ENCODE measurements at regions of chr9 and their contacts with region 1.

Region 1: DNA sequence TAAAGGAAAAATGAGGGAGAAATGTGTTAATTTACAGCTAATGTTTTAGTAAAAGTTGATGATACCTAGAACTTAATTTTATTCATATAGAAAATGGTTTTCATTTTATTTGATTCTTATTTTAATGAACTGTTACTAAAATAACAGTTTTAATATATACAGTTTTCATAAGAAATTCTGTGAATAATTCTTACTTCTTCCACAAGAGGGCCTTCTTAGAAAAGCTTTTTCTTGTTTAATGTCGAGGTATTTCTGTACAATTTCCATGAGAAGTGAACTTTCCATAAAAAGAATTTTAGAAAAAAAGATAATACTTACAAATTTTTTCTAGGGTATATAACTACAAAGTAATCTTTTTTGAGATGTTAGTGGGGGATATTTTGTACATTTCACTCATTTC is 73.9 kb downstream of the KLF9 start:
- DNase-seq: peak; percentile 5
- H3K4me3 ChIP-seq: no peak overlapping the region
- H3K27ac ChIP-seq: peak overlapping the region in 1 of 2 experiments; percentile 40; a peak in 1 of 4 replicates
- H3K4me1 ChIP-seq: no peaks in the 10 kb centered on the region; a peak in 1 of 4 replicates
- H3K27me3 ChIP-seq: no peaks in the 10 kb centered on the region
- CTCF ChIP-seq: peak; percentile 71
- EP300 ChIP-seq: no peak
- RAD21 ChIP-seq: peak; percentile 67

Region 2: GRCh38 chr9:70285246-70285645 is 55.3 kb before region 1 on chr9:
- CTCF ChIA-PET with region 1: no interaction called
- POLR2A ChIA-PET with region 1: no interaction called
- DNase-seq: peak; percentile 22
- H3K4me3 ChIP-seq: no peak overlapping the region
- H3K27ac ChIP-seq: peak overlapping the region in 1 of 2 experiments; percentile 71; a peak in 2 of 4 replicates
- H3K4me1 ChIP-seq: peaks cover 0 to 7% of the 10 kb centered on the region in 2 experiments; a peak in 2 of 4 replicates
- H3K27me3 ChIP-seq: no peaks in the 10 kb centered on the region
- CTCF ChIP-seq: no peak
- EP300 ChIP-seq: no peak
- RAD21 ChIP-seq: no peak

Region 3: GRCh38 chr9:70324963-70325362 is 15.6 kb before region 1 on chr9:
- CTCF ChIA-PET with region 1: interaction called, 10 read pairs
- POLR2A ChIA-PET with region 1: no interaction called
- DNase-seq: no peak
- H3K4me3 ChIP-seq: no peak overlapping the region
- H3K27ac ChIP-seq: no peak overlapping the region
- H3K4me1 ChIP-seq: no peaks in the 10 kb centered on the region
- H3K27me3 ChIP-seq: no peaks in the 10 kb centered on the region
- CTCF ChIP-seq: no peak
- EP300 ChIP-seq: no peak
- RAD21 ChIP-seq: no peak

Region 4: DNA sequence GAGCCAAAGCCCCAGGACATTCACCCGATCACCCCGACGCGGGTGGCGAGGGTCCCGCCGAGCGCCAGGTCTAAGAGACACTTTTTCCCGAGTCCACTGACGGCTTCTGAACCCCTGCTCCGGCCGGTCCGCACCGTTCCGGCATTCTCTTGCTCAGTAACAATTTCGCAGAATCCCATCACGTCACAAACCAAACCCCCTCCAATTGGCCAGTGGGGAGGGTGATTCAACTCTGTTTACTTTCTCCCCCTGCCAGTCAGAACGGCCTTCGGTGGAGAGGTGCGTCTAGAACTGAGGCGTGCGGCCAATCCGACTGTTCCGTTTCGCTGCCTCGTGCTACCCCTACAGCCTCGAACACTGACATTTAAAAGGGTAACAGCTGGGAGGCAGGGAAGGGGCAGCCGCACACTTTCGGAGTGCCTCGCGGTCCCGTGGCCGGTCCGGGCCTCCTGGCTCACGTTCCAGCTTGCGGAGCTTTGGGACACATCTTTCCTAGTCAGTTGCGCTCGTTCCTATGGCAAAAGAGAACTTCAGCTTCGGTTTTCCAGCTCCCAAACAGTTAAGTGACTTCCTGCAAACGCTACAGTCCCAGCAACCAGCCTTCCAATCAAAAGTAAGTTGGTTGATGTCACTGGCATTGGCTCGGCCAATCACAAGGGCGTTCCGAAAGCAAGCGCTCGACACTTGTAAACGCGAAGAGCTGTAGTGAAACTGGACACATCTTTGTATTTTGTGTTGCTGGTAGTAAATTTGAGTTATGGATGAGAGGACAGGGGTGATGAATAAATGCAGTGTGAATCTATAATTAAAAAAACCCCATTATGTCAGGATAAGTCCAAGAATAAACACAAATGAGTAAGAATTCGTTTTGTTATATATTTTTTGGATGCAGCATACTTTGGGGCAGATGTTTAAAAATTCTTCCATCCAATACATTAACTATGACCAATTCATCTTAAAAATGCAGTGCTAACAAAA is 73.5 kb after region 1 on chr9 and contains the start of gene KLF9:
- CTCF ChIA-PET with region 1: interaction called, 10 read pairs
- POLR2A ChIA-PET with region 1: no interaction called
- DNase-seq: peak; percentile 89
- H3K4me3 ChIP-seq: peak within 1 kb of the TSS; percentile 82 to 92
- H3K27ac ChIP-seq: peak within 1 kb of the TSS; percentile 97 to 100
- H3K4me1 ChIP-seq: peaks cover 20 to 25% of the 10 kb centered on the region in 2 experiments; a peak in 3 of 4 replicates
- H3K27me3 ChIP-seq: no peaks in the 10 kb centered on the region
- CTCF ChIP-seq: no peak
- EP300 ChIP-seq: peak; percentile 17 to 81; a peak in 3 of 4 replicates
- RAD21 ChIP-seq: no peak
- polyA plus RNA-seq, gene KLF9: 5.8 and 6.9 TPM in 2 replicates

Region 5: DNA sequence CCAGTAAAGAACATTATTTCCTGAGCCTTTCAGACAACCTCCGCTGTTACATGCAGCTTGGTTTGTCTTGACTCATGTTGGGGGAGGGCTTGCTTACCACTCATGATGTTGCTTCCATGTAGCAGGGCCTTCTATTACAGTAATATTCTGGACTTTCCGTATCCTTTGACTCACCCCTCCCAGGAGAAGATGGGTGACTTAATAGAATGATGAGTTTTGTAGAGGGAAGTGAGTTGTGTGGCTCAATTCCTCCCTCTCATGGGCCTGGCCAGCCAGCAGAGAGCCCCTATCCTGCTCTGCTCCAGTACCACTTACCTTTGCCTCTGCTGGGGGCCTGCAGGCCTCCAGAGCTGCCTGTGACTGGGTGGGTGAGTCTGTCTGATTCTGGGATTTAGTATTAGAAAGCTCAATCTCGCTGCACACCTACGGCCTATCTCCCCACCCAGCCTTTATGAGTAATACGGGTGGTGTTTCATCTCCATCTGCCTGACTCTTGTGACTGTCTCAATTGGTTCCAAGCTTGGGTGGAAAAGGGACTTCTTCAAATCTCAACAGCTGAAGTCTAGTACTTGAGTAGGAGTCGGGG is 126.5 kb after region 1 on chr9:
- CTCF ChIA-PET with region 1: no interaction called
- POLR2A ChIA-PET with region 1: no interaction called
- DNase-seq: no peak
- H3K4me3 ChIP-seq: no peak overlapping the region
- H3K27ac ChIP-seq: no peak overlapping the region
- H3K4me1 ChIP-seq: no peaks in the 10 kb centered on the region; a peak in 1 of 4 replicates
- H3K27me3 ChIP-seq: no peaks in the 10 kb centered on the region
- CTCF ChIP-seq: no peak
- EP300 ChIP-seq: no peak
- RAD21 ChIP-seq: no peak